ENCODE measurements at regions of chr1 and their contacts with region 1.

Region 1: DNA sequence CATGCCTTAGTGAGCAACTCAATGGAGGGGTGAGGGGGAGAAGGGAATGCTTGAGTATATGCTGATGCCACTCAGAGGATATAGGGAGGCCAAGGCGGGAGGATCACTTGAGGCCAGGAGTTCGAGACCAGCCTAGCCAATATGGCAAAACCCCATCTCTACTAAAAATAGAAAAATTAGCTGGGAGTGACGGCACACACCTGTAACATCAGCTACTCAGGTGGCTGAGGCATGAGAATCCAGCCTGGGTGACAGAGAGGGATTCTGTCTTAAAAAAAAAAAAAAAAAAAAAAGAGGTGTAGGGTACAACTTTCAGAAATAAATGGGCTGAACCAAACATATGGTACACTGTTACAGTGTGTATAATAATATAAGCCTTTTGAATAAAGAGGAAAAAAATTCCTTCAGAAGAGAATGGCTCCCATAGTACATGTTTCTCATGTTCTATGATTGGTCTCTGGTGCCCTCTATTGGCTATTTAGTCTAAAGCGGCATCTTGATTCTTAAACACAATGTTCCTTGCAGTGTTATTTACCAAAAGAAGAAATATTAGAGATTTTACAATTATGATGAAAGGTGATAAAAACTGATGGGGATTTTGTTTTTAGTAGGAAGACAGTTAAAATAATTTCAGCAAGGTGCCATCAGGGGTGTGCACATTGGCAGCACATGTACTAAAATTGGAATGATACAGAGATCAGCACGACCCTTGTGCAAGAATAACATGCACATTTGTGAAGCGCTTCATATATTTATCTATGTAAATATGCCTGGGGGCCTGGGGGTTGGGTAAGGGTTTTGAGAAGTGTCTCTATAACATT is 109.8 kb downstream of the PATJ start:
- DNase-seq: no peak
- ATAC-seq: peak; percentile 68
- H3K4me3 Mint-ChIP-seq: no peak overlapping the region
- H3K27ac Mint-ChIP-seq: no peak overlapping the region
- H3K4me1 Mint-ChIP-seq: no peaks in the 10 kb centered on the region
- H3K27me3 Mint-ChIP-seq: no peaks in the 10 kb centered on the region

Region 2: DNA sequence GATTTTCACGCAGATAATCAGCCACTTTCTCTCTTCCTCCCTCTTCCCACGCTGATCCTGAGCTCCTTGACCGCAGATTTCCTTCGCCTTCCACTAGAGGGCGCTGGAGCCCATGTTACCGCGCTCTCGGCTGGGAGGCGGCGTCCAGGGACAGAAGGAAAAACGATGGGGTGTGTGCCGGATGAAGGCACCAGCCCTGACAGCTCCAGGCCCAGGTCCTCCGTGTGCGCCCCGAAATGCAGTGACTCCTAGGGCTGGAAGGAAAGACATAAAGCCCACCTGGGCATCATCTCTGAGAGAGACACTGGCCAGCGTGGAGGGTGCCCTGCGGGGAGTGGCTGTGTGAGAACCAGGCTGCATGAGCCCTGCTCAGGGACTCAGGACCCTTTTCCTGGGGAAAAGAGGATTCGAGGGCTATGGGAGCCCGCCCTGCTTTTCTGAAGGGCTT is 1880.6 kb before region 1 on chr1:
- CTCF ChIA-PET with region 1: no interaction called
- POLR2A ChIA-PET with region 1: no interaction called
- intact Hi-C with region 1: loop called (anchors 5 kb)
- DNase-seq: peak; percentile 74
- ATAC-seq: peak; percentile 47
- H3K4me3 Mint-ChIP-seq: no peak overlapping the region
- H3K27ac Mint-ChIP-seq: no peak overlapping the region
- H3K4me1 Mint-ChIP-seq: peaks cover 5% of the 10 kb centered on the region
- H3K27me3 Mint-ChIP-seq: peaks cover 21% of the 10 kb centered on the region

Region 3: DNA sequence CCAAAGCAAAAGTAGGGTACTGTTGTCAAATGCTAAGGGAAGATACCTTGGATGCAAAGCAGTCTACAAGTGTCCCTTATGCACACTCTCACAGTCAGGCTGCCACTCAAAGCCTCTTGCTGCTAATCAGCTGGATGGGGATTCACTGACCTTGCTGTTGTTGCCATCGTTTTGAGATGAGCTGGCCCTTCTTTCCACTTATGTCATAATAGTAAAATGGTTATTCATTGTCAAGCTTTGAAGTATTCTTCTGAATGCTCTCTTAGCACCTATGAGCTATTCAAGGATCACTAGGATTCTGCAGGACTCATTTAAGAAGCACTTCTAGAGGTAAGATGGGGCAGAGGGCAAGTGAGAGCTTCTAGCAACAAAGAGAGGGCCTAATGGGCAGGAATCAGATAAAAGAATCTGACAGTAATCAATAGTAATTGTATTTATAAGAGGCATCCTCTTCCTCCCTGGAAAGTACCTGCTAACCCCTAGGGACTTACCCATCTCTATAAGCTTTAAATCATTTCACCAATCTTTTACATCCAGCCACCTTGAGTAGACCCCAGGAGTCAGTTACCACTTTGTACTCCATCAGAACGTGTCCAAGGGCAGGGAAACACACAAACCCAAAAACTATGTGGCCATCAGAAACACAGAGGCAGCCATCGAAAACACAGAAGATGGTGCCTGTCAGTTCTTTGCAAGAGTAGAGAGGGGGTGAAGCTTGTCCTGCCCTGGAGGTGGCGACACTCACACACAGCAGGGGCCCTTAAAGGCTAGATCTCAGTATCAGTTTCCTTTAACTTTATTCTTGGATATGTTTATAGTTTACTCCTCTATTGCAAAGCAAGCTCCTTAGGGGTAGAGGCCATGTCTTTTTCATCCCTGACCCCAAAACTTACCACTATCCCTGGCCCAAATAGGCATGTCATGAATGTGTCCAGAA is 873.4 kb before region 1 on chr1:
- CTCF ChIA-PET with region 1: no interaction called
- POLR2A ChIA-PET with region 1: no interaction called
- intact Hi-C with region 1: loop called in 1 of 2 experiments (anchors 5 kb)
- DNase-seq: peak; percentile 54
- ATAC-seq: peak; percentile 80
- H3K4me3 Mint-ChIP-seq: no peak overlapping the region
- H3K27ac Mint-ChIP-seq: no peak overlapping the region
- H3K4me1 Mint-ChIP-seq: peaks cover 2% of the 10 kb centered on the region
- H3K27me3 Mint-ChIP-seq: peaks cover under 1% of the 10 kb centered on the region

Region 4: GRCh38 chr1:61552630-61553305 is 299.3 kb before region 1 on chr1:
- CTCF ChIA-PET with region 1: interaction called, 3 read pairs
- POLR2A ChIA-PET with region 1: no interaction called
- intact Hi-C with region 1: loop called in 1 of 2 experiments (anchors 2 kb)
- DNase-seq: no peak
- ATAC-seq: no peak
- H3K4me3 Mint-ChIP-seq: no peak overlapping the region
- H3K27ac Mint-ChIP-seq: no peak overlapping the region
- H3K4me1 Mint-ChIP-seq: no peaks in the 10 kb centered on the region
- H3K27me3 Mint-ChIP-seq: peaks cover 5% of the 10 kb centered on the region

Region 5: DNA sequence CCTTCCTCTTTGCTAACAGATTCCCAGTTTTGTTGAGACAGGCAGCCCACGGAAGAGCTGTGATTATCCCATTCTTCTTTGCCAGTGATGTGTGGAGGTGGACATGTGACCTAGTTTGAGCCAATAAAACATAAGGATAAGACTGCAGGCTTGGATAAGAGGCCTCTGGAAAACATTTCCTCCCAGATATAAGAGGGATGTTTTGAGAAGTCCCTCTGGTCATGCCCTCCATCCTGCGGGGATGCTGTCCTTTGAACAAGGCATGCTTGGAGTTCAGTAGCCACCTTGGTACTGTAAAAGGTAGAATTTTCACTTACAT is 282.8 kb before region 1 on chr1:
- CTCF ChIA-PET with region 1: no interaction called
- POLR2A ChIA-PET with region 1: no interaction called
- intact Hi-C with region 1: no loop called
- DNase-seq: no peak
- ATAC-seq: no peak
- H3K4me3 Mint-ChIP-seq: no peak overlapping the region
- H3K27ac Mint-ChIP-seq: no peak overlapping the region
- H3K4me1 Mint-ChIP-seq: no peaks in the 10 kb centered on the region
- H3K27me3 Mint-ChIP-seq: peaks cover 2% of the 10 kb centered on the region

Region 6: DNA sequence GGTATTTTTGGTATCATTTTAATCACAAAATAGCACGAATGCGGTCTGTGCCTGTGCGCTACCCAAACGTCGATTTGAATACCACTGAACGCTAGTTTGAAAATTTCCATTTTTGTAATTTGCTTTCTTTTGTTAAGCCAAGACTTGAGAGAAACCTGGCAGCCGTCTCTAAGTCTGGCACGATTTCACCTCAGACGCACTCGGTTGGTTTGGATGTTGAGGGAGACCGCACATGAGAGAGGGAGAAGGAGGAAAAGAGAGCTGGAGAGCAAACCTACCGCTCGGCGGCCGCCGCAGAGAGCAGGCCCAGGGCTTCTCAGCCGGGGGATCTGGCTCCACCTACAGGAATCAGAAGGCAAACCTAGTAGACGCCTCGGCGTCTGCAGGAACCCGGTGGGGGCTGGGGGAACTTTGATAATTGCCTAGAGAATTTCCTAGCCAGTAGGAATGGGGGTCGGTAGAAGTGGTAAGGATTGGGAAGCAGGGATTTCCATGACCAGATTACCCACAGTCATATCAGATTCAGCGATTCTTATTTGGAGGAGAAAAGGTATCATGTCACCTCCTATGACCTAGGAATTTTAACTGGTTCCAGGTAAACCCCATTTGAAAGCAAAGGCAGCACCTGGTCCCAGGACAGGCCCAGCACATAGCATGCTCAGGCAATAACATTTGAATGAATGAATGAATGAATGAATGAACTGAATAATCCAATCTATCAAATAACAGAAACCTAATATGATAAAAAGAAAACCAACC is 210.3 kb before region 1 on chr1:
- CTCF ChIA-PET with region 1: no interaction called
- POLR2A ChIA-PET with region 1: no interaction called
- intact Hi-C with region 1: loop called (anchors 2 to 10 kb)
- DNase-seq: peak; percentile 83
- ATAC-seq: peak; percentile 97
- H3K4me3 Mint-ChIP-seq: peak overlapping the region; percentile 54
- H3K27ac Mint-ChIP-seq: peak overlapping the region; percentile 61
- H3K4me1 Mint-ChIP-seq: peaks cover 11% of the 10 kb centered on the region
- H3K27me3 Mint-ChIP-seq: no peaks in the 10 kb centered on the region

Region 7: DNA sequence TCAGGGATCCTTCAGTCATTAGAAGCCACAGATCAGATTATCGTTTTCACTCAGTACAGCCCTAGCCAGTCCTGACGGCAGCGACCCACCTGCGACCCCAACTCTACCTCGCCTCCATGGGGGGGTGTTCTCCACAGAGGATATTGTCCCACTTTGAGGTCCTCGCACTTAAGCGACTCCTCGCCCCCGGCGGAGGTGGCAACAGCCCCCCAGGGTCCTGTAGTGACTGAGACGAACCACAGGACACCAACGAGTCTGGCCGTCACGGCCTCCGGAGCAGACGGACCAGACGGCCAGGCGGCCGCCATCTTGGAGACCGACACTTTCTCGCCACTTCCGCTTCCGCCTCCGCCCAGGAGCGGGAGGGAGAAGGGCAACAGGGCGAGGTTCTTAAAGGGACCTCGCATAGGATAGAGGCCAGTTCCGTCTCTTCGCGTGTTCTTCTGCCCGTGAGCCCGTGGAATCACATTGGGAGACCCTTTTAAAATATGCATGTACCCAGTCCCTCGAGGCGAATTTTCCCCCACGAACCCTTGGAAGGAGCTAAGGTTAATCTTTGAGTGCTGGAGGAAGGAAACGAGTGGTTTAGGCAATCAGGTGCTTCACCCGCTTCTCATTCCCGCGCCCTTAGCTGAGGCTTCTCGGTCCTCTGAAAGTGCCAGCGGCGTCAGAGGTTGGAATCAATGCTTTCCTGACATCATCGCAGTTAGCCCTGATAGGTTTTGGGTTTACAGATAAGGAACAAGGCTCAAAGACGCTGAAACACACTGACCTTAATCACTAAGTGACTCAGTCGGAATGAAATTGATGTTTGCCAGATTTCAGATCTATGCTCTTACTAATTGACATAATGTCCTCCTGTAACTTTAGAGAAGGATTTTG is 127.0 kb before region 1 on chr1 and contains the start of gene TM2D1:
- CTCF ChIA-PET with region 1: no interaction called
- POLR2A ChIA-PET with region 1: no interaction called
- intact Hi-C with region 1: loop called (anchors 5 kb)
- DNase-seq: peak; percentile 92
- ATAC-seq: peak; percentile 93
- H3K4me3 Mint-ChIP-seq: peak within 1 kb of the TSS; percentile 97
- H3K27ac Mint-ChIP-seq: peak within 1 kb of the TSS; percentile 98
- H3K4me1 Mint-ChIP-seq: peaks cover 17% of the 10 kb centered on the region
- H3K27me3 Mint-ChIP-seq: no peaks in the 10 kb centered on the region
- total RNA-seq, gene TM2D1: 20.8 to 26.4 TPM

Region 8: GRCh38 chr1:61782771-61783170 is 69.3 kb before region 1 on chr1:
- CTCF ChIA-PET with region 1: no interaction called
- POLR2A ChIA-PET with region 1: no interaction called
- intact Hi-C with region 1: no loop called
- DNase-seq: peak; percentile 79
- ATAC-seq: peak; percentile 94
- H3K4me3 Mint-ChIP-seq: peak overlapping the region; percentile 2
- H3K27ac Mint-ChIP-seq: peak overlapping the region; percentile 65
- H3K4me1 Mint-ChIP-seq: peaks cover 49% of the 10 kb centered on the region
- H3K27me3 Mint-ChIP-seq: no peaks in the 10 kb centered on the region

Region 9: DNA sequence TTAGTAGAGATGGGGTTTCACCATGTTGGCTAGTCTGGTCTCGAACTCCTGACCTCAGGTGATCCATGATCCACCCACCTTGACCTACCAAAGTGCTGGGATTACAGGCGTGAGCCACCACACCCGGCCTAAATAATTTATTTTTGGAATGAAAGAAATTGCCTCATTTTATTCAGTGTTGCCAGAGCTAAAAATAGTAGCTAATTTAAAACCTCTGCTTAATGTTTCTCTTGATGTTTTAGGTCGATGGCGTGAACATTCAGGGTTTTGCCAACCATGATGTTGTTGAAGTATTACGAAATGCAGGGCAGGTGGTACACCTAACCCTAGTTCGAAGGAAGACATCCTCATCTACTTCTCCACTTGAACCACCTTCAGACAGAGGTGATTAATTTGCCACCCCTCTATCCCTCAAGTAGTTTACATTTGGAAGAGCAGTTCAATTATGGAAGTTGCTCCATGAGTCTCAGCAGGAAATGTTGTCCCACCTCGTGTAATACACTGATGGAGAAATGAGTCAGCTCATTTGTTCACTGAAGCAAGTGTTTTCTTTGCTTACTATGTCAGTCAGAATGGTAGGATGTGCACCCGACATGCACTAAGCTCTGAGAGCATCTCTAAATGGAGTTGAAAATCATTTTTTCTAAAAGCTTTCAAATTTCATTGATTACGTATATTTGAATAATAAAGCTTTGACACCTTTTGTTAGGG is 54.9 kb before region 1 on chr1:
- CTCF ChIA-PET with region 1: no interaction called
- POLR2A ChIA-PET with region 1: no interaction called
- intact Hi-C with region 1: no loop called
- DNase-seq: no peak
- ATAC-seq: no peak
- H3K4me3 Mint-ChIP-seq: no peak overlapping the region
- H3K27ac Mint-ChIP-seq: no peak overlapping the region
- H3K4me1 Mint-ChIP-seq: peaks cover 4% of the 10 kb centered on the region
- H3K27me3 Mint-ChIP-seq: no peaks in the 10 kb centered on the region

Region 10: DNA sequence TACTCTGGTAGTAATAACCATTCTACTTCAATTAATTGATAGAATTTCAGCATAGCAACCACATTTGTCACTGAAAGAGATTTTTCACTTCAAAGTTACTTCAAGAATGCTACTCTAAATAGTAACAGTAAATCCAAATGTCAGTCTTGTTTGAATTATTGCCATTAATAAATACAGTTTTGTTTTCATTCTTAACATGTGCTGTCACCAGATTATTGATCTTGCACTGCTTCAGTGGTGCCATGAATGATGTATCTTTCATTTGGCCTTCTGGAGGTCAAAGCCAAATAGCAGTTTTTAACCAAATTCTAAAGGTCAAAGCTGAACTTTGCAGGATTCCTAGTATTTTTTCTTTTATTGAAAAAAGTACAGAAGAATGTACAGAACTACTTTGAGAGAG is 89.7 kb after region 1 on chr1:
- CTCF ChIA-PET with region 1: no interaction called
- POLR2A ChIA-PET with region 1: no interaction called
- intact Hi-C with region 1: no loop called
- DNase-seq: no peak
- ATAC-seq: no peak
- H3K4me3 Mint-ChIP-seq: no peak overlapping the region
- H3K27ac Mint-ChIP-seq: no peak overlapping the region
- H3K4me1 Mint-ChIP-seq: no peaks in the 10 kb centered on the region
- H3K27me3 Mint-ChIP-seq: no peaks in the 10 kb centered on the region

Measured in activated CD4-positive, alpha-beta T cell treated with anti-CD3 and anti-CD28 coated beads for 36 hours (primary cell).